ENCODE measurements at regions of chr1 and their contacts with region 1.

Region 1: GRCh38 chr1:242710286-242710685 is 185.8 kb upstream of the PLD5 start:
- DNase-seq: no peak
- ATAC-seq: no peak
- H3K4me3 Mint-ChIP-seq: no peak overlapping the region
- H3K27ac Mint-ChIP-seq: no peak overlapping the region
- H3K4me1 Mint-ChIP-seq: no peaks in the 10 kb centered on the region
- H3K27me3 Mint-ChIP-seq: no peaks in the 10 kb centered on the region

Region 2: DNA sequence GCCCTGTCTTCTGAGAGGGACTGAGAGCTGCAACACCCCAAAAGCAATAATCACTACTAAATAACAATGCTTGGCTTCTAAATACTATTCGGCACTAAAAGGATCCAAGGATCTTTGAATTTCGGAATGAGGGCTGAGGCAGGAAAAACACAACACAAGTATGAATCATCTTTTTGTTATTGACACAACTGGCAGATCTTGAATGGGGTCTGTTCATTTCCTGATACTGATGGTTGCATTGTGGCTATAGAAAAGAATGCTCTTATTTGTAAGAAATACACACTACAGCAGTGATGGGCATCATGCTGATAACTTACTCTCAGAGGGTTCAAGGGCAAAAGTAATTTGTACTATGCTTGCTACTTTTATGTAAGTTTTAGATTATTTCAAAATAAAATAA is 36.6 kb before region 1 on chr1:
- CTCF ChIA-PET with region 1: no interaction called
- POLR2A ChIA-PET with region 1: no interaction called
- intact Hi-C with region 1: no loop called
- DNase-seq: no peak
- ATAC-seq: no peak
- H3K4me3 Mint-ChIP-seq: no peak overlapping the region
- H3K27ac Mint-ChIP-seq: no peak overlapping the region
- H3K4me1 Mint-ChIP-seq: no peaks in the 10 kb centered on the region
- H3K27me3 Mint-ChIP-seq: no peaks in the 10 kb centered on the region

Region 3: DNA sequence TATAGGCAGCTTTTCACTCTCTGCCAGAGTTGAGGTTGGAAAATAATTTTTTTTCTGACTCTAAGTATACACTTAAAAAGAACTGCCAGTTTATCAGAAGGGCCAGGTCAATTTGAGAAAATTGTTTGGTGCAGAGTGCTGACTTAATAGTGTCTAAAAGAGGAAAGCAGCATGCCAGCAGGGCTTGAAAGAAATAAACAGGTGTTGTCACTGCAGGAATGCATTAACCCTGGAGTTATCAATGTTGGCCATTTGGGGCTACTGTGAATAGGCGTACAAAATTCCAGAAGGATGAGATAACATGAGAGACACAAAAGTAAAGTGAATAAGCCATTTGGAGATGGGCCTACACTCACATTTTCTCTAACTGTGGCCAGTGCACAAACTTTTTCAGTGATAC is 34.8 kb after region 1 on chr1:
- CTCF ChIA-PET with region 1: no interaction called
- POLR2A ChIA-PET with region 1: no interaction called
- intact Hi-C with region 1: loop called in 1 of 2 experiments (anchors 1 kb)
- DNase-seq: no peak
- ATAC-seq: no peak
- H3K4me3 Mint-ChIP-seq: no peak overlapping the region
- H3K27ac Mint-ChIP-seq: no peak overlapping the region
- H3K4me1 Mint-ChIP-seq: no peaks in the 10 kb centered on the region
- H3K27me3 Mint-ChIP-seq: no peaks in the 10 kb centered on the region

Measured in activated CD4-positive, alpha-beta T cell treated with anti-CD3 and anti-CD28 coated beads for 36 hours (primary cell).